H1 (cell line): ENCODE measurements at regions of chr11 and their contacts with region 1.

Region 1: DNA sequence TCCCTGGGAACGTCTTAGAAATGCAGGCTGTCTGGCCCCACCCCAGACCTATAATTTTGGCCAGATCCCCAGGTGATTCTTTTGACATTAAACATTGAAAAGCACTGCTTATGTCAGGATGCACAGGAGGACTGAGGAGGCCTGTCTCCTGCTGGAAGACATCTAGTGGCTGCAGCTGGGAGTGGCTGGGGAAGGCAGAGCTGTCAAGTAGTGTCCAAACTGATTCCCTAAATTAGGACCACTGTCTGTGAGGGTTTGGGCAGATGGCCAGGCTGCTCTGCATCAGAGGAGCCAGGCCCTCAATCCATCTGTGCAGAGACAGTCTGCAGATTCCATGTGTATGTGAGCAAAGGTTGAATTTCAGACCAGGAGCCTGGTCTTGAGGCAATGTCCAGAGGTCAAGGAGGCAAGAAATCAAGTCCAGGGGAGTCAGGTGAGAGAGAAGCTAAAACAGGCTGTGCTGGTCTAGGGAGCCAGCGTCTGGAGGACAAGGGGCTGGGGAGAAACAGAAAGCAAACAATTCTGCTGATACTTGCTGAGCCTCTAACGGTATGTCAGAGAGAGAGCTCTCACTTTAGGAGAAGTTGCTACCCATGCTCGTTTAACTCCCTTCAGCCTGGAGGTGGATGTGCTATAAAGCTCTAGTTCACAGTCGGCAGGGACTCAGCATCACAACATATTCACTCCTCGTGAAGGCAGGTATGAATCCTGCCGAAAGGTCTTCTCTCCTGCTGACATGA is 15.3 kb upstream of the SYTL2 start:
- DNase-seq: no peak
- H3K4me3 ChIP-seq: no peak overlapping the region
- H3K27ac ChIP-seq: no peak overlapping the region
- H3K4me1 ChIP-seq: no peaks in the 10 kb centered on the region
- H3K27me3 ChIP-seq: 0 out of 7 replicates have a peak, but pooled peaks cover 0 to 3% (median 0%) of the 10 kb centered on the region in 4 experiments
- CTCF ChIP-seq: peak; percentile 69 to 72 (median 71)
- EP300 ChIP-seq: no peak
- POLR2A ChIP-seq: no peak
- RAD21 ChIP-seq: peak; percentile 59 to 70

Region 2: DNA sequence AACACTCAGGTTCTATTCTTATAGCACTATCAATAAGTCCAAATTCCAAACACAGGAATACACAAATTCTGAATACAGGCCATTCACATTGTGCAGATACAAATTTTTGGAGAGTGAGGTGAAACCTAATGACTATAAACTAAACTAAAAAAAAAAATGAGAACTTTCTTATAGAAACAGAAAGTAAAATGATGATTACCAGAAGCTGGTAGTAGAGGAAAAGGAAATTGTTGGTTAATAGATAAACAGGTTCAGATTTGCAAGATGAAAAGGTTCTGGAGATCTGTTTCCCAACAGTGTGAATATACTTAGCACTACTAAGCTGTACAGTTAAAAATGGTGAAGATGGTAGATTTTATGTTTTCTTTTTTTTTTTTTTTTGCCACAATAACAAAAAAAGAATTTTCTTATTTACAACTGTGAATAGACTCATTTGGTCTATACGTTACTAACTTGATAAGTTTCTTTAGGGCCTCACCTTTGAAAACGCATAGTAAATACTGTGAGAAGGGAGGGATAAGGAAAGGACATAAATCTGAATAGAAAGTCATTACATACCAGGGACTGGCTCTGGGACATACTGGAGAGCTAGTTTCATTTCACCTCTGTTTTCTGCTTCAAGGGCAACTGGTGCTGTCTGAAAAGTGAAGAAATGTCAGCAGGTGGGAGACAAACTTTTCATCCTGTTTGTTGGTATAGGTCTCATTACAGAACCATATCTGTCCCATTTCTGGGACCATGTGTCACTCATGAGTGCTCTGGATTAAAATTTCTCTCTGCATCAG is 126.1 kb before region 1 on chr11:
- CTCF ChIA-PET with region 1: interaction called, 13 read pairs
- POLR2A ChIA-PET with region 1: no interaction called
- DNase-seq: no peak
- H3K4me3 ChIP-seq: no peak overlapping the region
- H3K27ac ChIP-seq: no peak overlapping the region
- H3K4me1 ChIP-seq: no peaks in the 10 kb centered on the region
- H3K27me3 ChIP-seq: no peaks in the 10 kb centered on the region
- CTCF ChIP-seq: no peak
- EP300 ChIP-seq: no peak
- POLR2A ChIP-seq: no peak
- RAD21 ChIP-seq: no peak

Region 3: DNA sequence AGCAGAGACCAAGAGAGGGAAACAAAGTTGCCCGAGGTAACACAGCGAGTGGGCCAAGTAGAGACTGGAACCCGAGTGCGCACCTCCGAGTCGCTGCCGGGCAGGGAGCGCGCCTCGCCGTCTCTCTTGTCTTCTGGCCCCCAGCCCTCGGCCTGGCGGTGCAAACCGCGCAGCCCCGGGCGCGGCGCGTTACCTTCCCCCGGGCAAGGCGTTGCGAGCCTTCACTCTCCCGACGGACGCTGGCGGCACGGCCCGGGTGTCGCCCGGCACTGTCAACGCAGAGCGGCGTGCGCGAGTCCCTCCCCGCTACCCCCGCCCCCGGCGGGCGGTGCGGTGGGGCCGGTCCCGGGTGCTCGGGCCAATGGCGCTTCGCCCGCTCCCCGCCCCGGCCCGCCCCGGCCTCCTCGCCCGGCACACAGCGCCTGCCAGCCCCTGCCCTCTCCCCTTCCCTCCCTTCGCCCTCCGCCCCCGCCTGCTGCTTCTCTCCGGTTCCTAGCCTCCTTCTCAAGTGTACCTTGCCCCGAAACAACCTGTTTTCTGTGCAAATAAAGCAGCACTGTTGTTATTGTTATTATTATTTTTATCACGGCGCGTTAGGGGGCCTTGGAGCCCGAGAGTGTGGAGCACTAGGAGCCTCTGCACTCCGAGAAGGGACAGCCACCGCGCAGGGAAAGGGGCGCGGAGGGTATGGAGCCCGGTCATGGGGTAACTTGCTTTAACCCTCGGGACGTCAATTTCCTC is 15.2 kb before region 1 on chr11 and contains the start of gene SYTL2:
- CTCF ChIA-PET with region 1: interaction called, 31 read pairs
- POLR2A ChIA-PET with region 1: no interaction called
- DNase-seq: peak in 1 of 2 experiments; percentile 87
- H3K4me3 ChIP-seq: peak within 1 kb of the TSS; percentile 55 to 91 (median 68)
- H3K27ac ChIP-seq: no peak within 1 kb of the TSS
- H3K4me1 ChIP-seq: peaks cover 0 to 3% (median 2%) of the 10 kb centered on the region in 4 experiments; a peak in 4 of 7 replicates
- H3K27me3 ChIP-seq: peaks cover 0 to 35% (median 18%) of the 10 kb centered on the region in 4 experiments; a peak in 6 of 7 replicates
- CTCF ChIP-seq: peak in 1 of 3 experiments; percentile 21; a peak in 1 of 4 replicates
- EP300 ChIP-seq: no peak
- POLR2A ChIP-seq: 0 out of 3 replicates have a peak, but pooled peaks of 1 of the 2 experiments have one; percentile 18
- RAD21 ChIP-seq: no peak
- total RNA-seq, gene SYTL2: 9.1 TPM in 2 replicates

Region 4: DNA sequence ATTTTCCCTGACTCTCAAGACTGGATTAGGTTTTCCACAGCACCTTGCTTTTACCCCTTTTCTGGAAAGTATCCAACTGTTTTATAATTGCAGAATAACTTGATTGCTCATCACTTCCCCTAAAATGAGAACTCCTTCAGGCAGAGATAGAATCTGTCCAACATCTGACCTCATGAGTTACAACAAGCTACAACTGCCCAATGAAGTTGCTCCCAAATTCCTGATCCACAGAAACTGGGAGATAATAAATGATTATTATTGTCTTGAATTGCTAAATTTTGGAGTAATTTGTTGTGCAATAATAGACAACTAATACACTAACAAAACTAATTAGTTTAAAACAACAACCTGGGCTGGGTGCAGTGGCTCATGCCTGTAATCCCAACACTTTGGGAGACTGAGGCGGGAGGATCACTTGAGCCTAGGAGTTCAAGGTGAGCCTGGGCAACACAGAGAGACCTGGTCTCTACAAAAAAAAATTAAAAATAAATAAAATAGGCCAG is 18.9 kb after region 1 on chr11:
- CTCF ChIA-PET with region 1: interaction called, 10 read pairs
- POLR2A ChIA-PET with region 1: interaction called, 3 read pairs
- DNase-seq: no peak
- H3K4me3 ChIP-seq: no peak overlapping the region
- H3K27ac ChIP-seq: no peak overlapping the region
- H3K4me1 ChIP-seq: no peaks in the 10 kb centered on the region
- H3K27me3 ChIP-seq: peaks cover 0 to 1% (median 0%) of the 10 kb centered on the region in 4 experiments; a peak in 1 of 7 replicates
- CTCF ChIP-seq: no peak
- EP300 ChIP-seq: no peak
- POLR2A ChIP-seq: no peak
- RAD21 ChIP-seq: no peak

Region 5: DNA sequence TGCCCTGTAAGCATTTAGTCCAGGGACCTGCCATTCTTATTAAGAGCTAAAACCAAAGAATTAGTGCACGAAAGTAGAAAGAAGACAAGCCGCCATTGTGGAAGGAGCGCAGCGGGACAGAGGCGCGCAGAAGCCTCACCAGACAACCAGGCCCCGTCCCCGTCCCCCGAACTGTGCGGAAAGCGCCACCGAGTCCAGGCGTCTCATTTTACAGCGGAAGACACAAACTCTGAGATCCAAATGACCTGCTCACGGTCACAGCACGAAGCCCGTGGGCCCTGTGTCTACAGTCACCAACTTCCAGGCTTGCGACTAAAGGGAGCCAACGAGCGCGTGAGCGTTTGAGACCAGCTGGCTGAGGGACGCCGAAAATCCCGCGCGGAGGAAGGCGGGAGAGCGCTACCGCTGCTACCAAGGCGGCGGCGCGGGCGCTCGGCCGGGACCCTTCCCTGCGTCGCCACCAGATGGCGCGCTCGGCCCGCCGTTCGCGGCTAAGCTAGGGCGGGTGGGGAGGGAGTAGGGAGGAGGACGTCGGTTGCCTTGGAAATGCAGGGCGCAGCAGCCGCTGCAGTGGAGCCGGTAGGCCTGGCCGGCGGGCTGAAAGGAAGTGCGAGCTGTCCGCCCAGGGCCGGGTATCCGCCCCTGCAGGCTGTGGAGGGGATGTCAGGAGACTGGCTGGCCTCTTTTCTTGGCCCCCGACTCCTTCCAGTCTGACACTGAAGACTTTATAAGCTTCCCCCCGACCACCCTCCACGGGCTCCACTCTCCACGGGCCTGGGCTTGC is 28.5 kb after region 1 on chr11:
- CTCF ChIA-PET with region 1: interaction called, 11 read pairs
- POLR2A ChIA-PET with region 1: interaction called, 3 read pairs
- DNase-seq: peak; percentile 91 to 97
- H3K4me3 ChIP-seq: peak overlapping the region; percentile 49 to 74 (median 66)
- H3K27ac ChIP-seq: peak overlapping the region; percentile 88
- H3K4me1 ChIP-seq: peaks cover 0 to 4% (median 3%) of the 10 kb centered on the region in 4 experiments; a peak in 4 of 7 replicates
- H3K27me3 ChIP-seq: no peaks in the 10 kb centered on the region
- CTCF ChIP-seq: peak; percentile 69 to 86 (median 69)
- EP300 ChIP-seq: peak in 1 of 2 experiments; percentile 47; a peak in 1 of 3 replicates
- POLR2A ChIP-seq: peak in 1 of 2 experiments; percentile 89; a peak in 2 of 3 replicates
- RAD21 ChIP-seq: peak; percentile 91 to 94